ENCODE measurements at regions of chr2 and their contacts with region 1.

Region 1: DNA sequence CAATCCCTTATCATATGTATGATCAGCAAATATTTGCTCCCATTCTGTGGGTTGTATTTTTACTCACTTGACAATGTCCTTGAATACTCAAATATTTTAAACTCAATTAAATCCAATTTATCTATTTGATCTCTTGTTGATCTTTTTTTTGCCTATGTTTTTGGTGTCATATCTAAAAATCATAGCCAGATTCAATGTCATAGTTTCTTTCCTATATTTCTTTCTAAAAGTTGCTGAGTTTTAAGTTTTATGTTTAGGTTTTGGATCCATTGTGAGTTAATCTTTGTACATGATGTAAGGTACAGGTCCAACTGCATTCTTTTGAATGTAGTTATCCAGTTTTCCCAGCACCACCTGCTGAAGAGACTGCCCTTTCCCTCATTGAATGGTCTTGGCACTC is 742.7 kb upstream of the POU3F3 start:
- DNase-seq: no peak
- H3K4me3 ChIP-seq: no peak overlapping the region
- H3K27ac ChIP-seq: no peak overlapping the region
- H3K4me1 ChIP-seq: no peaks in the 10 kb centered on the region
- H3K27me3 ChIP-seq: no peaks in the 10 kb centered on the region
- CTCF ChIP-seq: no peak

Region 2: DNA sequence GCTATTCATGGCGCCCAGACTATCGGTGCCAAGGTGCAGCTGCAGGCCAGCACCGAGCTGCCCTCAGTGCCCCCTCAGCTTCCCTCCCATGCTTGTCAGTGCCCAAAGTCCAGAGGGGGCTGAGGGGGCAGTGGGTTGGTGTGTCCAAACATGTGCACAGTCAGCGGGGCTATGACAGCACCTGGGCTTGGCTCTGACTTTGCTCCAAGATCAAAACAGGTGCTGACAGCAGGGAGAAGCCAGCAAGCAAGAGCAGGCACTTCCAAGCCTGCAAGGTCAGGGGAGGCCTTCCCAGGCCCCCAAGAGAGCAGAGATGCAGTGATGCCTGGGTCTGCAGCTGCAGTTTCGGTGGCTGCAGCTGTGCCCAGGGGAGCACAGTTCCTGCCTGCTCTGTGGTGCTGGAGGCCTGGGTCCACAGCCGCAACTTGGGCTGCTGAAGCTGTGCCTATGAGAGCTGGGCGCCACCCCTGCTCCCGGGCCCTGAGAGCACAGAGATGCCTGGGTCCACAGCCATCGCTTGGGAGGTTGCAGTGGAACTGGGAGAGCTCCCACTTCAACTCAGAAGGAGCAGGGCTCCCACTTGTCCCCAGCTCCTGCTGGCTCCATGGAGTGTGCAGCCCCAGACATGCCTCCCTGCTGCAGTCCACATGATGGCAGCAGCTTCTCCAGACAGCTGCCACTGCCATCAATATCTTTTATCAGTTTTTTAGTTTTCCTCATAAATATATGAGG is 32.6 kb before region 1 on chr2:
- CTCF ChIA-PET with region 1: no interaction called
- POLR2A ChIA-PET with region 1: no interaction called
- intact Hi-C with region 1: loop called (anchors 1 kb)
- DNase-seq: no peak
- H3K4me3 ChIP-seq: no peak overlapping the region
- H3K27ac ChIP-seq: no peak overlapping the region
- H3K4me1 ChIP-seq: no peaks in the 10 kb centered on the region
- H3K27me3 ChIP-seq: no peaks in the 10 kb centered on the region
- CTCF ChIP-seq: no peak

Measured in A673 (cell line).